Activated CD4-positive, alpha-beta memory T cell treated with anti-CD3 and anti-CD28 coated beads for 36 hours (primary cell): ENCODE measurements at regions of chr1 and their contacts with region 1.

Region 1: DNA sequence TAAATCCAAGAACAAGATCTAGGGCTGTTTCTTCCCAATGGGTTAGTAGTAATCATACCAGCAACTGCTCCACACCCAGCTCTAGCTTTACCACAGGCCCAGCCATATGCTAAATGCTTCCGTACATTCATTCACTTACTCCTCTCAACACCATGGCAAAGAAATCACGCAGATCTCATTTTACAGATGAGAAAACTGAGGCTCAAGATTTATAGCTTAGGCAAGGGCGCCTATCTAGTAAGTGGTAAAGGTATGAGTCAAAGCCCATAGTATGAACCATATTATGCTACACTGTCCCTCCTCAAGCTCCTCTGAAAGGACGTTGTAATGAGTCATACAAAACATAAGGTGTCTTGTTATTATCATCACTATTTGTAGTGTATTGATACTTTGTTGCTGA is 82.2 kb downstream of the NIBAN1 start:
- DNase-seq: peak; percentile 53
- H3K4me3 Mint-ChIP-seq: no peak overlapping the region
- H3K27ac Mint-ChIP-seq: peak overlapping the region; percentile 76
- H3K4me1 Mint-ChIP-seq: peaks cover 58% of the 10 kb centered on the region
- H3K27me3 Mint-ChIP-seq: peaks cover 1% of the 10 kb centered on the region

Region 2: DNA sequence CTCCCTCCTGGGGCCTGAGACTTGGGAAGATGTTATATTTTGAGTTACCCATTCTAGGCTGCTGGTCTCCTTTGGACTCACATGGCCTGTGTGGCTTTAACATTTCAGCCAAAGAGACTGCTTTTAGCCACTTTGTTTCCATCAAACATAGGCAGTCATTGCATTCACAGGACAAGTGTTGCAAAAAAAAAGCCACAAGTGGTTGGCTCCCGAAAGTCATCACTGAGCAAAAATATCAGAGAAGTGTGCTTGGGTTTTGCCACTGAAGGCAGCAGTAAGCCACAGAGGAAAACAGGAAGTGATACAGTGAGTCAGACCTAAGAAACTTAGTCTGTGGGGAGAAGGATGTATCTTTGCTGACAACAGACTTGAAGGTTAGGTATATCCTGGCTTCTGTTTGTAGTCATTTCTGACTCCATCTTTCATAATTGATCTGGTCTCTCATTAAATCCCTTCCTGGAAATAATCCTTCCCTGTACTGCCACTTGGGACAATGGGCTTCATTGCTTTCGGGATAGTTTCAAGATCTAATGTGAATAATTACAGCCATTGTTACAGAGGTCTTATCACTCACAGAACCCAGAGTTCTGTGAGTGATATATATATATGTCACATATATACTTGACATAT is 935.4 kb before region 1 on chr1:
- CTCF ChIA-PET with region 1: no interaction called
- POLR2A ChIA-PET with region 1: no interaction called
- intact Hi-C with region 1: loop called (anchors 5 kb)
- DNase-seq: peak; percentile 72
- H3K4me3 Mint-ChIP-seq: no peak overlapping the region
- H3K27ac Mint-ChIP-seq: no peak overlapping the region
- H3K4me1 Mint-ChIP-seq: peaks cover 17% of the 10 kb centered on the region
- H3K27me3 Mint-ChIP-seq: no peaks in the 10 kb centered on the region

Region 3: GRCh38 chr1:184866991-184867788 is 24.9 kb before region 1 on chr1:
- CTCF ChIA-PET with region 1: interaction called, 8 read pairs
- POLR2A ChIA-PET with region 1: interaction called, 29 read pairs
- intact Hi-C with region 1: loop called (anchors 1 kb)
- DNase-seq: peak; percentile 79
- H3K4me3 Mint-ChIP-seq: peak overlapping the region; percentile 54
- H3K27ac Mint-ChIP-seq: peak overlapping the region; percentile 85
- H3K4me1 Mint-ChIP-seq: peaks cover 52% of the 10 kb centered on the region
- H3K27me3 Mint-ChIP-seq: no peaks in the 10 kb centered on the region

Region 4: GRCh38 chr1:184929711-184930631 is 37.9 kb after region 1 on chr1:
- CTCF ChIA-PET with region 1: no interaction called
- POLR2A ChIA-PET with region 1: no interaction called
- intact Hi-C with region 1: loop called (anchors 1 kb)
- DNase-seq: no peak
- H3K4me3 Mint-ChIP-seq: no peak overlapping the region
- H3K27ac Mint-ChIP-seq: no peak overlapping the region
- H3K4me1 Mint-ChIP-seq: peaks cover 11% of the 10 kb centered on the region
- H3K27me3 Mint-ChIP-seq: no peaks in the 10 kb centered on the region

Region 5: DNA sequence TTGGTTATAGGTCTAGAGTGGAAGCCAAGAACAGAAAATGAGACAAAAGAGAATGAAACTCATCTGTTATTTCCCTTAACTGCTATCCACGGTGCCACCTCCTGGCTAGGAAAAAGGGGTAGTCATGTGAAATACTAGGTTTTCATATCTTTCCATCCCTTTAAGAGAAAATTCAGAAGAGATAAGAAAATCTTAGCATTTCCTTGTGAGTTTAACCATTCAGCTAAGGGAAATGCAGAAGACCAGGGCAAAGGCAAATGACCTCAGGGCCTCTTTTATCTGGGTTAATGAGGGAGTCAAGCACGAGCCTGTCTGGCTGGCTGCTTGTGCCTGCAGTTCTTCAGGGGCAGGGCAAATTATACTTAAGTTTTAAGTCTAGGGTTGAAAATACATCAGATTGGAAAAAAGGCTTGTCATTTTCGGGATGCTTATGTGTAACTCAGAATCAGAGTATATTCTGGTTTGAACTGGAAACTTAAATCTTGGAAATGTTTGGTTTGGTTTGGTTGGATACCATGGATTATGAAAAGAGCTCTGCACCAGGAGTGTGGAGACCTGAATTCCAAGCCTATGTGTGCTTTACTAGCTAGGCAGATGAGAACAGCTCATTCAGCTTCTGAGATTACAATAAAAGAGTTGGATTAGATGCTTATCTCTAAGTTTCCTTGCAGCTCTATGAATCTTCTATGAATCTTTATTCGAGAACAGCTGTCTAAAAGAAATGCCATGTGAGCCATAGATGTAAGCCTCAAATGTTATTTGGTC is 62.3 kb after region 1 on chr1:
- CTCF ChIA-PET with region 1: no interaction called
- POLR2A ChIA-PET with region 1: interaction called, 4 read pairs
- intact Hi-C with region 1: loop called (anchors 1 kb)
- DNase-seq: no peak
- H3K4me3 Mint-ChIP-seq: peak overlapping the region; percentile 40
- H3K27ac Mint-ChIP-seq: peak overlapping the region; percentile 74
- H3K4me1 Mint-ChIP-seq: peaks cover 29% of the 10 kb centered on the region
- H3K27me3 Mint-ChIP-seq: no peaks in the 10 kb centered on the region

Region 6: DNA sequence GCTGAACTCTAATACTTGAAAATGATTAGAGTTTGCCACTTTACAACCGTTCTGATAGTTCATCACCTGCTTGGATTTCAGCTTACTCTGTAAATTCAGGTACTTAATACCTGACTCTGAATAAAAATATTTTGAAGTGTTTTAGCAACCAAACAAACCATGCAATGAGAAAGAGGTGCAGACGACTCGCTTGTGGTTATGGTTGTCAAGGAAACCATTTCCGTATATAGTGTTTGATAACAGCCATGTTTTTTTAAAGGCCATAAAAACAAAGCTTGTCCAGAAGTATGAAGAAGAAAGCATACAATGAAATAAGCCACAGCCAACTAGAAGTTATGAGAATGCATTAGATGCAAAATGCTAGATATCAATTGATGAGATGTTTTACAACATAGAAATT is 674.9 kb after region 1 on chr1:
- CTCF ChIA-PET with region 1: no interaction called
- POLR2A ChIA-PET with region 1: no interaction called
- intact Hi-C with region 1: loop called (anchors 5 kb)
- DNase-seq: peak; percentile 57
- H3K4me3 Mint-ChIP-seq: no peak overlapping the region
- H3K27ac Mint-ChIP-seq: peak overlapping the region; percentile 74
- H3K4me1 Mint-ChIP-seq: peaks cover 62% of the 10 kb centered on the region
- H3K27me3 Mint-ChIP-seq: no peaks in the 10 kb centered on the region

Region 7: GRCh38 chr1:185652348-185652747 is 760.2 kb after region 1 on chr1:
- CTCF ChIA-PET with region 1: no interaction called
- POLR2A ChIA-PET with region 1: no interaction called
- intact Hi-C with region 1: no loop called
- DNase-seq: no peak
- H3K4me3 Mint-ChIP-seq: no peak overlapping the region
- H3K27ac Mint-ChIP-seq: no peak overlapping the region
- H3K4me1 Mint-ChIP-seq: peaks cover 9% of the 10 kb centered on the region
- H3K27me3 Mint-ChIP-seq: no peaks in the 10 kb centered on the region